ENCODE measurements at regions of chr18 and their contacts with region 1.

Region 1: DNA sequence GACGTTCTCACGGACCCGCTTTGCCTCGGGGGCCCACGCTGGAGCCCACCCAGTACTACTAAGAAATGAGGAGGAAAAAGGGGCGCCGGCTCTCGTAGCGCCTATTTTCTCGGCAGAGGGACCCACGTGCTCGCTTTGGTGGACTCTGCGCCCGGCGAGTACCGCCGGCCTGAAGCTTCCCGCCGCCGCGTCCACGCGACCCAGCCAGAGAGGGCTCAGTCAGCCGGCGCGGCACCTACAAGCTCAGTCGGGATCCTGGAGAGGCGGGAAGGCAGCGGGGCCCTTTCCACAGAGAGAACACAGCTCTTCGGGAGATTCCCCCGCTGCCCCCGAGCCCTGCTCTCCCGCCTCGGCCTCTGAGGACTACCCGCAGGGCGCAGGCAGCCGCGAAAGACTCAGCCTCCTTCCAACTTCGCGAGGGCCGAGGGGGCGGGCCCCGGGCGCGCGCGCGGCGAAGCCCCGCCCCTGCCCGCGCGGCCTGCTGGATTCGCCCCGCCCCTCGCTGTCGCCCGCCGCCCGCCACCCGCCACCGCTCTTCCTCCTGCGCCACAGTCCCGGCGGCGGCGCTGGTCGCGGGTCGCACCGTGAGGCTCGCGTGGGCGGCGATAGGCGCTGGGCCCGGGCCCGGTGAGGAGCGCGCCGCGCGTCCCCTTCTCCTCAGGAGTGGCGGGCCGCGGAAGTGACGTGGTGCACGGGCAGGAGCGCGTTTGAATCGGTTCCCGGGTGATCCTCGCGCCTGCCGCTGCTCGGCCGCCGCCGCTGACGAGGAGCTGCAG is at the start of gene SMCHD1:
- DNase-seq: peak; percentile 88 to 92 (median 90)
- H3K4me3 ChIP-seq: peak within 1 kb of the TSS; percentile 66 to 98
- H3K4me3 Mint-ChIP-seq: peak within 1 kb of the TSS; percentile 89 to 99 (median 98)
- H3K27ac ChIP-seq: peak within 1 kb of the TSS; percentile 99
- H3K27ac Mint-ChIP-seq: peak within 1 kb of the TSS; percentile 93 to 99 (median 98)
- H3K4me1 ChIP-seq: peaks cover 23% of the 10 kb centered on the region
- H3K4me1 Mint-ChIP-seq: peaks cover 17 to 38% (median 27%) of the 10 kb centered on the region in 4 donors
- H3K27me3 ChIP-seq: no peaks in the 10 kb centered on the region
- H3K27me3 Mint-ChIP-seq: no peaks in the 10 kb centered on the region
- total RNA-seq, gene SMCHD1: 268 to 288 TPM

Region 2: DNA sequence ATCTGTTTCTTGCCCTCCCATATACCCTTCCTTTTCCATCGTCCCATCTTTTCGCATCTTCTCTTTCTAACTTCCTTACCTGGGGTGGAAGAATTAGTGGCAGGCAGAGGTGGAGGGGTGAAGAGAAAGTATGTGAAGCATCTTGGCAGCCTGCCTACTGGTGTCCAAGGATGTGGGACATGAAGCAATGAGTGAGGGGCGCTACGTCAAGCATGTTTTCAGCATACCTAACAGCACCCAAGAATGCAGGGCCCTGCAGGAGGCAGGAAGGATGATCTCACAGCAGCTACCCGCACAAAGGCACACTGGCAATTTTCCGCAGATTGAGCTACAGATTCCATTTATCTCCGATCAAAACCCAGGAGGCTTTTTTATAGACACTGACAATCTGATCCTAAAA is 126.2 kb before region 1 on chr18:
- CTCF ChIA-PET with region 1: no interaction called
- POLR2A ChIA-PET with region 1: no interaction called
- intact Hi-C with region 1: no loop called
- DNase-seq: no peak
- H3K4me3 ChIP-seq: no peak overlapping the region
- H3K4me3 Mint-ChIP-seq: no peak overlapping the region
- H3K27ac ChIP-seq: no peak overlapping the region
- H3K27ac Mint-ChIP-seq: peak overlapping the region in 2 of 7 donors; percentile 5 to 56
- H3K4me1 ChIP-seq: no peaks in the 10 kb centered on the region
- H3K4me1 Mint-ChIP-seq: no peaks in the 10 kb centered on the region
- H3K27me3 ChIP-seq: no peaks in the 10 kb centered on the region
- H3K27me3 Mint-ChIP-seq: no peaks in the 10 kb centered on the region

Region 3: DNA sequence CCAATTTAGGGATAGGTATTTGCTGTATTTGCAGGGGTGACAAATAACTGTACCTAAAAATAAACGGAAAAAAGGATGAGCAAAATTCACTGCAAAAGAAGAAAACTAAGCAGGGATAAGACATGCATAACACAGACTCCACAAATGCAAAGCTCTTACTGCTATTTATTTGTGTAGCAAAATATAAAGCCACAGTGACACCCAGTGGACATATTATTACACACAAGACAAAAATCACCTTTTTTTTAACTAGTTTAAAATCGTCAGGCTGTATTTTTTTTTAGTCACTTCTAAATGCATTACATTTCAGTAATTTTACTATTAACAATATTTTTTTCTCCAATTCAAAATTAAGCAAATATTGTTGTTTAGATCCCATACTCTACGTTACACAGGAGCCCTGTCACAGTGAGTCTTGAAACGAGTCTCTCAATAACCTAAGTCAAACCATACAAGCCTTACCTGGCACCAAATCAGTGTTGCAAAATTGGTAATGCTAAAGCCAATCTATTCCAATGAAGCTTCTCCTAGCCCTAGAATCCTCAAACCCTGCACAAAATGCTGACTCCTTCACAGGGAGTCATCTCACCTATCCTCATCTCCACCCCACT is 107.8 kb before region 1 on chr18:
- CTCF ChIA-PET with region 1: interaction called, 6 read pairs
- POLR2A ChIA-PET with region 1: interaction called, 5 read pairs
- intact Hi-C with region 1: loop called (anchors 1 kb)
- DNase-seq: peak in 4 of 5 donors; percentile 31 to 40 (median 40)
- H3K4me3 ChIP-seq: no peak overlapping the region
- H3K4me3 Mint-ChIP-seq: no peak overlapping the region
- H3K27ac ChIP-seq: no peak overlapping the region
- H3K27ac Mint-ChIP-seq: peak overlapping the region in 3 of 7 donors; percentile 20 to 49 (median 48)
- H3K4me1 ChIP-seq: no peaks in the 10 kb centered on the region
- H3K4me1 Mint-ChIP-seq: peaks cover 14 to 17% (median 15%) of the 10 kb centered on the region in 4 donors
- H3K27me3 ChIP-seq: no peaks in the 10 kb centered on the region
- H3K27me3 Mint-ChIP-seq: no peaks in the 10 kb centered on the region

Region 4: GRCh38 chr18:2589345-2590068 is 65.9 kb before region 1 on chr18:
- CTCF ChIA-PET with region 1: interaction called, 18 read pairs
- POLR2A ChIA-PET with region 1: interaction called, 95 read pairs
- intact Hi-C with region 1: loop called (anchors 5 kb)
- DNase-seq: peak in 4 of 5 donors; percentile 15 to 37 (median 22)
- H3K4me3 ChIP-seq: peak overlapping the region in 1 of 2 donors; percentile 38
- H3K4me3 Mint-ChIP-seq: peak overlapping the region in 7 of 8 donors; percentile 63 to 88 (median 76)
- H3K27ac ChIP-seq: peak overlapping the region; percentile 52
- H3K27ac Mint-ChIP-seq: peak overlapping the region; percentile 65 to 95 (median 93)
- H3K4me1 ChIP-seq: peaks cover 48% of the 10 kb centered on the region
- H3K4me1 Mint-ChIP-seq: peaks cover 22 to 57% (median 37%) of the 10 kb centered on the region in 4 donors
- H3K27me3 ChIP-seq: no peaks in the 10 kb centered on the region
- H3K27me3 Mint-ChIP-seq: no peaks in the 10 kb centered on the region

Region 5: GRCh38 chr18:2627821-2628276 is 27.5 kb before region 1 on chr18:
- CTCF ChIA-PET with region 1: no interaction called
- POLR2A ChIA-PET with region 1: interaction called, 33 read pairs
- intact Hi-C with region 1: no loop called
- DNase-seq: no peak
- H3K4me3 ChIP-seq: no peak overlapping the region
- H3K4me3 Mint-ChIP-seq: peak overlapping the region in 1 of 8 donors; percentile 14
- H3K27ac ChIP-seq: no peak overlapping the region
- H3K27ac Mint-ChIP-seq: peak overlapping the region in 1 of 7 donors; percentile 30
- H3K4me1 ChIP-seq: peaks cover 10% of the 10 kb centered on the region
- H3K4me1 Mint-ChIP-seq: peaks cover 14 to 29% (median 25%) of the 10 kb centered on the region in 4 donors
- H3K27me3 ChIP-seq: no peaks in the 10 kb centered on the region
- H3K27me3 Mint-ChIP-seq: no peaks in the 10 kb centered on the region

Region 6: DNA sequence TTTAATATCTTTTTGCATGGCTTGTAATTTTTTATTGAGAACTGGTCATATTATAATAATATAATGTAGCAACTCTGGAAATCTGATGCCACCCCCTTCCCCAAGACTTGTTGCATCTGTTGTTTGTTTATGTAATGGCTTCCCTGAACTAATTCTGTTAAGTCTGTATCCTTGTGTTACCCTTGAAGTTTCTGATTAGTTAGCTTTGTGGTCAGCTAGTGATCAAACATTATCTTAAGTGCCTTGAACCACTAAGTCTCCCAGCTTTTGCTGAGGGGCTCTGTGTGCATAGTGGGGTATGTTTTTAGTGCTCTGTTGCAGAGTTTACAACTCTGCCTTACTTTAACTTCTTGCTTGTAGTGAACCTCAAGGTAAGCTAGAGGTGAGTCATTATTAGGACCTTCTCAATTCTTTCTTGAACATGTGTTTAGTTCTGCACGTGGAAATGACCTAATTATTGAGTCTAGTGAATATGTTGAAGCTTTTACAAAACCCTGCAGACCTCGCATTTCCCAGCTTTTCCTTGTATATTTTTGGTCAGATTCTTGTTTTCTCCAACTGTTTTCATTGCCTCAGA is 24.9 kb after region 1 on chr18:
- CTCF ChIA-PET with region 1: interaction called, 10 read pairs
- POLR2A ChIA-PET with region 1: interaction called, 59 read pairs
- intact Hi-C with region 1: no loop called
- DNase-seq: no peak
- H3K4me3 ChIP-seq: no peak overlapping the region
- H3K4me3 Mint-ChIP-seq: peak overlapping the region in 5 of 8 donors; percentile 3 to 64 (median 39)
- H3K27ac ChIP-seq: no peak overlapping the region
- H3K27ac Mint-ChIP-seq: peak overlapping the region in 5 of 7 donors; percentile 10 to 78 (median 67)
- H3K4me1 ChIP-seq: peaks cover 69% of the 10 kb centered on the region
- H3K4me1 Mint-ChIP-seq: peaks cover 42 to 75% (median 54%) of the 10 kb centered on the region in 4 donors
- H3K27me3 ChIP-seq: no peaks in the 10 kb centered on the region
- H3K27me3 Mint-ChIP-seq: no peaks in the 10 kb centered on the region

Region 7: DNA sequence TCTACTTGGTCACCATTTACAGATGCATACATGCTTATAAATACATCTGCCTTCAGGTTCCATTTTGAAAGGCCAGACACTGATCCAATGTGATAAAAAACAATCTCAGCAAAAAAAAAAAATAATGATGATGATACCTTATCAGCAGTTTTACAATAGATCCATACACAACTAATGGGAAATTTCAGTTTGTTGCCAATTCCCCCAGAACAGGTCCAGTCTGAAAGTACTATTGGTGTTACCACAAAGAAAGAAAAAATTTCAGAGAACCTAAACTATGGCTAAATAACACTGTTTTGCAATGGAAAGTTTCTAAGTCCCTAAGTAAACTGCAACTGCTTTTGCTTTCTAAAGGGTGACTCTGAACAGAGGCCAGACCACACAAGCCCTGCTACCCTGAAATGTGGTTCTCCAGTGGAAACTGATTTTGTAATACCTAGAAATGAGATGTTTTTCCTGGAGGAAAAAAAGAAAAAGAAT is 303.5 kb after region 1 on chr18:
- CTCF ChIA-PET with region 1: interaction called, 3 read pairs
- POLR2A ChIA-PET with region 1: no interaction called
- intact Hi-C with region 1: loop called (anchors 5 kb)
- DNase-seq: peak in 2 of 5 donors; percentile 37 to 64
- H3K4me3 ChIP-seq: peak overlapping the region in 1 of 2 donors; percentile 9
- H3K4me3 Mint-ChIP-seq: peak overlapping the region; percentile 4 to 89 (median 73)
- H3K27ac ChIP-seq: peak overlapping the region; percentile 79
- H3K27ac Mint-ChIP-seq: peak overlapping the region; percentile 88 to 99 (median 98)
- H3K4me1 ChIP-seq: peaks cover 95% of the 10 kb centered on the region
- H3K4me1 Mint-ChIP-seq: peaks cover 68 to 97% (median 85%) of the 10 kb centered on the region in 4 donors
- H3K27me3 ChIP-seq: no peaks in the 10 kb centered on the region
- H3K27me3 Mint-ChIP-seq: no peaks in the 10 kb centered on the region

Measured in CD4-positive, alpha-beta memory T cell (primary cell).